Panc1 (cell line): ENCODE measurements at regions of chr6 and their contacts with region 1.

Region 1: DNA sequence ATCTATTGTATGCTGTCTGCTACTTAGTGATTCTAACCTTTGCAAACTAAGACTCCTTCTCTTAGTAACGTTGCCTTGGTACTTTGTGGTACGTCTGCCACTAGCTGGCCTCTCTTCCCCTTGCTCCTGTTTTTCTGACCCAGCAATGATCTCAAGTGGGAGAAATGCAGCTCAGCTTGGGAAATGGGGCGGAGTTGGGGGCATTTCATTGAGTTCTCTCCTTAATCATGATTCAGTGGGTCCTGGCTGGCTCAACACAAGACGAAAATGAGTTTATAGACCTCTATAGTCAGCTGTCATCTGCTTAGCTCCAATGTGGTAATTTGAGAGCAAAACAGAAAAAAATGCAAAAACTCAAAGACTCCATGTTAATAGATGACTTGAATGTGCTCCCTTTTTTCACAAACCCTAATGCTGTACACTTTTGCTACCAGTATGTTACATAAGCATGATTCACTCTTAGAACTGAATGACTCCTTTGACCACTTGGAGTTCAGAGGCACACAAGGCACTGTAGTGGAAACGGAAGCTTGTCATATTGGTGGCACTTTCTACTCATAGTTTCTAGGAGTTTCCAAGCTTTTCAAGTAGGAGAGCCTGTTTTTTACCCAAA is 55.3 kb upstream of the SOX4 start:
- DNase-seq: no peak
- ATAC-seq: no peak
- H3K4me3 ChIP-seq: no peak overlapping the region
- H3K27ac ChIP-seq: no peak overlapping the region
- H3K4me1 ChIP-seq: no peaks in the 10 kb centered on the region
- H3K27me3 ChIP-seq: no peaks in the 10 kb centered on the region
- CTCF ChIP-seq: no peak

Region 2: GRCh38 chr6:21132856-21133838 is 405.1 kb before region 1 on chr6:
- CTCF ChIA-PET with region 1: no interaction called
- POLR2A ChIA-PET with region 1: interaction called, 19 read pairs
- in situ Hi-C with region 1: no loop called
- intact Hi-C with region 1: no loop called
- DNase-seq: no peak
- ATAC-seq: no peak
- H3K4me3 ChIP-seq: no peak overlapping the region
- H3K27ac ChIP-seq: 0 out of 2 replicates have a peak overlapping the region, but pooled peaks have one; percentile 7
- H3K4me1 ChIP-seq: peaks cover 2% of the 10 kb centered on the region; the same call in 1 of the 2 replicates
- H3K27me3 ChIP-seq: no peaks in the 10 kb centered on the region
- CTCF ChIP-seq: no peak

Region 3: DNA sequence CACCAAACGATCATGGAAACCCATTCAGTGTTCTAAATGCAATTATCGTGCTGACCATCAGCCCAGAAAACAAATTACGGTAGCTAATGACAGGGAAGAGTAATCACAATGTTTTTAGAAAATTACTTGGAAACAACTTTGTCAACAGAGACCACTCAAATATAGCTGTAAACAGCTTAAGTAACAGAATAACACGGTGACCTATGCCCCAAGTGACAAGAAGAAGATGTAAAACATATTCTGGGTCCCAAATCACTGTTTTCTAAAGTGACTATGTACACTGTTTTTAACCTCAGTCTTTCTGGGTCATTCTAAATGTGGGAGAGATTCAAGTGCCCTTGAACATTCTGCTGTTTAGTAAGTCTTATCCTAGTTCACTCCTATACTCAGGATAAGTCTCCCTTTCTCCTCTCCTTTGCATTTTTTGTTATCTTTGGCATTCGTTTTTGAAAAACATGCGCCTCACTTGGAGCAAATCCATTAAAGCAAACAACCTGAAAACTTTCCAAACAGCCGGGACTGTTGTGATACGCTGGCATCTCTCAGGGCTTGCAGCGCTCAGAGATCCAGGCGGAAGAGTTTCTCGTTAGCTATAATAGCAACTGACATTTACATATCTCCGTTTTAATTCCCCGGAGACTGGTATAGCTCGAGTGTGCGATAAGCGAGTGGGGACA is 59.3 kb before region 1 on chr6:
- CTCF ChIA-PET with region 1: no interaction called
- POLR2A ChIA-PET with region 1: no interaction called
- in situ Hi-C with region 1: no loop called
- intact Hi-C with region 1: no loop called
- DNase-seq: no peak
- ATAC-seq: peak; percentile 69; the same call in 1 of the 2 replicates
- H3K4me3 ChIP-seq: peak overlapping the region; percentile 15 to 39
- H3K27ac ChIP-seq: no peak overlapping the region
- H3K4me1 ChIP-seq: peaks cover 6% of the 10 kb centered on the region; the same call in 1 of the 2 replicates
- H3K27me3 ChIP-seq: no peaks in the 10 kb centered on the region
- CTCF ChIP-seq: no peak